ENCODE measurements at regions of chr10 and their contacts with region 1.

Region 1: DNA sequence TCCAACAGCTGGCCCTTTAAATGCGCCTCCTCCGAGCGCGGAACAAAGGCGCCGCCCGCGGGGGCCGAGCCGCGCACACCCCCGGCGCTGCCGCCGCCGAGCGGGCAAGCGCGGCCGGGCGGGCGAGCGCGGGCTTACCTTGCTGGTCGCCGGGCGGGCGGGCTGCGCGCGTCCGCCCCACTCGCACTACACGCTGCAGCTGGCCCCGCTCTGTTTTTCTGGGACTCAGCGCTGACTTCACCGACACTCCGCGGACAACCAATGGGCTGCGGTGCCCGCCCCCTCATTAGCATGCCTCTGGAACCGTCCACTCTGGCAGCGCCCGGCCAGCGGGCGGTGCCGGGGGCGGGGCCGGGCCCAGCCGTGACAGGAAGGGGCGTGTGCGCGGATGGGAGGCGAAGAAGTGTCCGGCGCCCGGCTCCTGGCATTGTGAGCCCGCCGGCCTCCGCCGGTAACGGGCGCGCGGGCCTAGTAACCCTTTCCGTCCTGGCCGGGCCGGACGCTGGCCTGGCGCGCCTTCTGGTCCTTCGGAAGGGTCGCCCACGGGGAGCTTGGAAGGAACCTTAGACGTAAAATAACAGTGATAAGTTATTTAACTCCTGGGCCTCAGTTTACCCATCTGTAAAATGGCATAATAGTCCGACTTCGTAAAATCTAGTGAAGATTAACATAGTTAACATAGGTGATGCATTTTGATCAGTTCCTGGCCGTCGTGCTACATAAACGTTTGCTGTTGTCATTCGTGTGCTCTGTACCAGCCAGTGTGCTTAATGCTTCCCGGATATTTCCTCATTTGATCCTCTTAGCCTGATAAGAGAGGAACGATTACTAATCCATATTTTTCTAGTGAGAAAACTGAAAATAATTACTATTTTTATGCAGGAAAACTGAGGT is at the start of gene SORBS1:
- DNase-seq: peak; percentile 97 to 98
- ATAC-seq: peak; percentile 97
- H3K4me3 ChIP-seq: peak within 1 kb of the TSS; percentile 96 to 97
- H3K27ac ChIP-seq: peak within 1 kb of the TSS; percentile 78 to 95
- H3K4me1 ChIP-seq: no peaks in the 10 kb centered on the region
- H3K27me3 ChIP-seq: no peaks in the 10 kb centered on the region
- total RNA-seq, gene SORBS1: 591 to 1,478 TPM

Region 2: GRCh38 chr10:95341716-95342130 is 219.7 kb before region 1 on chr10:
- intact Hi-C with region 1: no loop called
- DNase-seq: no peak
- ATAC-seq: no peak
- H3K4me3 ChIP-seq: no peak overlapping the region
- H3K27ac ChIP-seq: no peak overlapping the region
- H3K4me1 ChIP-seq: no peaks in the 10 kb centered on the region
- H3K27me3 ChIP-seq: no peaks in the 10 kb centered on the region

Region 3: GRCh38 chr10:95440756-95441546 is 120.5 kb before region 1 on chr10:
- intact Hi-C with region 1: loop called in 1 of 2 experiments (anchors 5 kb)
- DNase-seq: no peak
- ATAC-seq: no peak
- H3K4me3 ChIP-seq: no peak overlapping the region
- H3K27ac ChIP-seq: peak overlapping the region; percentile 55 to 59
- H3K4me1 ChIP-seq: peaks cover 0 to 6% of the 10 kb centered on the region in 2 donors
- H3K27me3 ChIP-seq: no peaks in the 10 kb centered on the region

Region 4: DNA sequence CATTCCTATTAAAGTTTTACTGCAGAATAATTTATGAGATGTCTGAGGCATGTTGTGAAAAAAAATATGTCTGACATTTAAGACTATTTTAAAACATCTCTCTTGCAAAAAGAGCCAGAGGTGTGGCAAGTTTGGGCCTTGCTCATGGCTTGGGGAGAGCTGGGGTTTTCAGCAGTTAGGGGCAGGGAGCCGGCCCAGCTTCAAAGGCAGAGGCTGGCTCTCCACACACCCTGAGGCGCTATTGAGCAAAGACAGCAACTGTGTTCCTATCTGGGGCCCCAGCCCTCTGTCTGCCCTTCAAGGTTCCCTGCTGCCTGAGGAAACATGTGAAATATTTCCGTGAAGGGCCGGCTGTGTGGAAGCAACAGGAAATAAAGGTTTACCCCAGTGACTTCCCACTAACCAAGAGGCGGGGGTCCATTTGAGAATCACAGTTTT is 94.2 kb before region 1 on chr10:
- intact Hi-C with region 1: loop called in 1 of 2 experiments (anchors 10 kb)
- DNase-seq: no peak
- ATAC-seq: no peak
- H3K4me3 ChIP-seq: no peak overlapping the region
- H3K27ac ChIP-seq: peak overlapping the region; percentile 34 to 61
- H3K4me1 ChIP-seq: peaks cover 17 to 25% of the 10 kb centered on the region in 2 donors
- H3K27me3 ChIP-seq: no peaks in the 10 kb centered on the region

Region 5: DNA sequence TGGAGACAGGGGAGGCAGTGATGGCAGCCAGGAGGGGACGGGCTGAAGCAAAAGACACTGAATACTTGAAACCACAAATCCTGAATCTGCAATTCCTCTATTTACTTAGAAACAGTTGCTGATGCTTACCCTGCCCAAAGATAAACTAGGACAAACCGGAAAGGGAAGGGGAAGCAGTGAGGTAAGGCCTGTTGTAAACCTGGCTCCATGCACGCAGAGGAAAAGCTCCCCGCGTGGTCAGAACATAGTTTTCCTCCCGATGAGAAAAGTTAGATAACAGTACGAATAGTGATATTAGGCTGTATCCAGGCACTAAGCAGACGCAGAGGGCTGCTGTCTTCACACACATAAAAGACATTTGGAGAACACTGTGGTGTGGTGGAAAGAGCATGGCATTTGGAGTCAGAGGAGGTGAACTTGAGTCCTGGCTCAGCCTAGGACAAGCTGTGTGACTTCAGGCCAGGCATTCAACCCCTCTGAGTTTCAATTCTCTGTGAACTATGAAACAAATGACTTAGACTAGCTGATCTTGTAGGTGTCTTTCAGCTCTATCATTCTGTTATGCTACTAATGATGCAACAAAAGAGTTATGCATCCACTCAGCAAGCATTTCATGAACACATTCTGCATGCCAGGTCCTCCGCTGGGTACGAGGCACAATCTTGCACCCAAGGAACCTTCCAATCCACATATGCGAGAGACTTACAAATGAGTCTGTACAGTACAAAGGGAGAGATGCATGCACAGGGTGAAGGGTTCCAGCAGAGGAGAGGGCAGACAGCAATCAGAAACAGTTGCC is 81.1 kb before region 1 on chr10:
- intact Hi-C with region 1: no loop called
- DNase-seq: no peak
- ATAC-seq: peak; percentile 52
- H3K4me3 ChIP-seq: no peak overlapping the region
- H3K27ac ChIP-seq: peak overlapping the region; percentile 64 to 82
- H3K4me1 ChIP-seq: peaks cover 7 to 18% of the 10 kb centered on the region in 2 donors
- H3K27me3 ChIP-seq: no peaks in the 10 kb centered on the region

Region 6: DNA sequence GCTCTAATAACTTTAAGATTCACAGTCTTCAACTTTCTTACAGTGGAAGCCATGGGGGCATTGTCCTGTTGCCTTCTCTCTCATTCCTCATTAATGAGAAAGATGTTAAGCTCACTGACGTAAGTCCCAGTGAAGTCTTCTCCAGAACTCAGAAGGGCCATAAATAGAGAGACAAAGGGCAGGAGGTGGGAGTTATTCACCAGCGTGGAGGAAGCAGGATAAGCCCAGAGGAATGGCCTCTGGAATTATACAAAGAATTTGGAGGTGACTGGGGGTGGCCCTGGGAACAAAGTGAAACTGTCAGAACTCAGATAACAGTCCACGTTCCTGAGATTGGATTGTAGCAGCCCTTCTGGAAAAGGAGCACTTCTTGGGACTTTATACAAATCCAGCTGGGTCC is 52.7 kb before region 1 on chr10:
- intact Hi-C with region 1: loop called in 1 of 2 experiments (anchors 10 kb)
- DNase-seq: no peak
- ATAC-seq: peak; percentile 20
- H3K4me3 ChIP-seq: no peak overlapping the region
- H3K27ac ChIP-seq: peak overlapping the region; percentile 98
- H3K4me1 ChIP-seq: peaks cover 6 to 10% of the 10 kb centered on the region in 2 donors
- H3K27me3 ChIP-seq: no peaks in the 10 kb centered on the region

Region 7: DNA sequence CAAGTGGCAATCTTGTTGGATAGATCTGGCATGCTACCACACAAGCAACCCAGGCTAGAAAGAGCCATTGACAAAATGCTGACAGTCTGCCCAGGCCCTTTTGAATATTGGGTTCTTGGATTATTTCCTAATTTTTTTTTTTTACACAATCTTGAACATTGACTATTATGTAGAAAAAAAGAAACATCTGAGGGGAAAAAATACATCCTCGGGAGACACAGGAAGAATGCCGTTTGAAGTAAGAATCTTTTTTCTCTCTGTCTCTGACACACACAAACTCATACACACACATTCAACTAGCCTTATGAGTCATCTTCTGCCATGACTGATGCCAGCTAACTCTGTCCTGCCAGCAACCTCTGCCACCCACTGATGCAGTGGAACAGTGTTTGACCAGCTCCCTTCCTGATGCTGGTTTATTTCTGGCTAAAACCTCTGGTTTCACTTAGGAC is 47.5 kb before region 1 on chr10:
- intact Hi-C with region 1: loop called (anchors 5 to 10 kb)
- DNase-seq: peak in 1 of 2 donors; percentile 73
- ATAC-seq: peak; percentile 80
- H3K4me3 ChIP-seq: no peak overlapping the region
- H3K27ac ChIP-seq: peak overlapping the region; percentile 77 to 85
- H3K4me1 ChIP-seq: peaks cover 7 to 10% of the 10 kb centered on the region in 2 donors
- H3K27me3 ChIP-seq: no peaks in the 10 kb centered on the region

Region 8: DNA sequence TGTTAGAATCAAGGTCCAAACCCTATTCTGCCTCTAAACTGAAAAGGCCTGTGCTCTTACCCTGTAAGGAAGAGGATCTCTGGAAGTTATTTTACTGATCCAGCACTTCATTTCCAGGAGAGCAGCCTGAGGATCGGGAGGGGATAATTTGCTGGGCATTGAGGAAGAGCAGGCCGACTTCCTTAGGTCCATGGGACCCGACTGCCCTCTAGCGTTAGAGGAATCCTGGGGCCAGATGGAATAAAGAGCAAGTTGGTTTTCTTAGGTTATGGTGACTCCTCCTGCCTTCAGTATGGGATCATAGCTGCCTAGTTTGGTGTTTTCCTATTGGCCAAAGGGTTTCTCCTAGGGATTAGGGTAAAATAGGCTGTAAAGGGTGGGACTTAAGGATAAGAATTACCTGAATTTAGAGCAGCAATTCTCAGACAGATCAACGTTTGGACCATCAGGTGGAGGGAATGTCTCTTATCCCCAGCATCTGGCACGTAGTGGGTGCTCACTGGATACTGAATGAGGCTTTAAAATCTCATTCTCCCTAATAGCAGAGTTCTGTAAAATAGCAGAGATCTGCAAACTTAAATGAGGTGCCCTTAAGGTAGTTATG is 39.8 kb after region 1 on chr10:
- intact Hi-C with region 1: loop called in 1 of 2 experiments (anchors 5 kb)
- DNase-seq: peak; percentile 85 to 88
- ATAC-seq: peak; percentile 90
- H3K4me3 ChIP-seq: no peak overlapping the region
- H3K27ac ChIP-seq: no peak overlapping the region
- H3K4me1 ChIP-seq: peaks cover 0 to 10% of the 10 kb centered on the region in 2 donors
- H3K27me3 ChIP-seq: no peaks in the 10 kb centered on the region